H1 (cell line): ENCODE measurements at regions of chr13 and their contacts with region 1.

Region 1: DNA sequence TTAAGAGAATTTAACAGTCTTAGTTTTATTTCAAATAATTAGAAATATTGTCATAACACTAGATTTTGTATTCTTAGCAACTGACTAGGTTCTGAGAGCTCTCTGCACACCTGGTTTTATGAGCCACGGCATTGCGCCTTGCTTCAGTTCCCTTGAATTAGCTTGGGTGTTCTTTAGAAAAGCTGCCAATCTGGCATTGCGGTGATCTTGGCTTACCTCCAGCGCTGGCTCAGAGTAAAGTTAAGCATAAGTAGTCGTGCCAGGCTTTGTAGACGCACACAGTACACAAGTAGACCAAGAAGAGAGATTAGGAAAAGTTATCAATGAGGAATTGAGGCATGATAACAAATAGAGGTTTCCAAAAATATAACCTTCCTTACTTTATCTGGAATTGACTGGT is 45.7 kb downstream of the TPP2 start:
- DNase-seq: no peak
- H3K4me3 ChIP-seq: no peak overlapping the region
- H3K27ac ChIP-seq: no peak overlapping the region
- H3K4me1 ChIP-seq: no peaks in the 10 kb centered on the region
- H3K27me3 ChIP-seq: no peaks in the 10 kb centered on the region
- CTCF ChIP-seq: no peak
- EP300 ChIP-seq: no peak
- POLR2A ChIP-seq: no peak
- RAD21 ChIP-seq: no peak

Region 2: GRCh38 chr13:102609696-102610095 is 32.8 kb before region 1 on chr13:
- CTCF ChIA-PET with region 1: no interaction called
- POLR2A ChIA-PET with region 1: no interaction called
- DNase-seq: no peak
- H3K4me3 ChIP-seq: no peak overlapping the region
- H3K27ac ChIP-seq: no peak overlapping the region
- H3K4me1 ChIP-seq: no peaks in the 10 kb centered on the region
- H3K27me3 ChIP-seq: no peaks in the 10 kb centered on the region
- CTCF ChIP-seq: no peak
- EP300 ChIP-seq: no peak
- POLR2A ChIP-seq: no peak
- RAD21 ChIP-seq: no peak

Region 3: DNA sequence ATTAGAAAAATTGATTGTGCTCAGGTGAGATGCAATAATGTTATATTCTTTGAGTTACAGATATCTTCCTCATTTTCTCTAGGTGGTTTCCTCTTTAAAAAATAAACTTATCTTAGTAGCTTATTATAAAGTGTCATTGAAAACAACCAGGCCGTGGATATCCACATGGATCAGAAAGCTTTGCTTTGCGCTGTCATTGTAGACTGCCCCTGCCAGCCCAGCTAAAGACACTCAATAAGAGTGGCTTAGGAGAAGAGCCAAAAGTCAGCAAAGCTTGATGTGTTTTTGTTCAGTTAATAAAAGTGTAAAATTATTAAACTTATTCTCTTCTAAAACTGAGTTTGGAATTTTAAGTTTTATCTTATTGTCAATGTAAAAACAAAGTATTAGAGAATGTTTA is 11.3 kb before region 1 on chr13:
- CTCF ChIA-PET with region 1: interaction called, 3 read pairs
- POLR2A ChIA-PET with region 1: interaction called, 10 read pairs
- DNase-seq: no peak
- H3K4me3 ChIP-seq: no peak overlapping the region
- H3K27ac ChIP-seq: no peak overlapping the region
- H3K4me1 ChIP-seq: no peaks in the 10 kb centered on the region
- H3K27me3 ChIP-seq: no peaks in the 10 kb centered on the region
- CTCF ChIP-seq: no peak
- EP300 ChIP-seq: no peak
- POLR2A ChIP-seq: no peak
- RAD21 ChIP-seq: no peak

Region 4: DNA sequence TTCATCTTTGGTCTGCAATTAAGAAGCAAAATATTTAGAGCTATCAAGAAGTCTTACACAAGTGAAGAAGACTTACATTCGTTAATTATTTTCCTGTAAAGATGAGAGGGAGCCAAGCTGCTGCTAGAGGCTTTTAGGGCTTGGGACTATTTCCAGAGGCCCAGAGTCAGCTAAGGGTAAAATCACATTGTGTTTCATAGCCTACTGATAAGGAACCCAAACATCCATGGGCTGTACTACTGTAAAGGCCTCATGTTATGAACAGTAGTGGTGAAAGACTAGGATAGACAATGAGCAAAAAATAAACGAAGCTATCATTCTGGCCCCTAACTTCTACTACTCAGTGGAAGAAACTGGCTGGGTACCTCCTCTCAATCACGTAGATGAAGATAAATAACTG is 142.0 kb after region 1 on chr13:
- CTCF ChIA-PET with region 1: no interaction called
- POLR2A ChIA-PET with region 1: no interaction called
- DNase-seq: no peak
- H3K4me3 ChIP-seq: no peak overlapping the region
- H3K27ac ChIP-seq: no peak overlapping the region
- H3K4me1 ChIP-seq: no peaks in the 10 kb centered on the region
- H3K27me3 ChIP-seq: no peaks in the 10 kb centered on the region
- CTCF ChIP-seq: no peak
- EP300 ChIP-seq: no peak
- POLR2A ChIP-seq: no peak
- RAD21 ChIP-seq: no peak

Region 5: DNA sequence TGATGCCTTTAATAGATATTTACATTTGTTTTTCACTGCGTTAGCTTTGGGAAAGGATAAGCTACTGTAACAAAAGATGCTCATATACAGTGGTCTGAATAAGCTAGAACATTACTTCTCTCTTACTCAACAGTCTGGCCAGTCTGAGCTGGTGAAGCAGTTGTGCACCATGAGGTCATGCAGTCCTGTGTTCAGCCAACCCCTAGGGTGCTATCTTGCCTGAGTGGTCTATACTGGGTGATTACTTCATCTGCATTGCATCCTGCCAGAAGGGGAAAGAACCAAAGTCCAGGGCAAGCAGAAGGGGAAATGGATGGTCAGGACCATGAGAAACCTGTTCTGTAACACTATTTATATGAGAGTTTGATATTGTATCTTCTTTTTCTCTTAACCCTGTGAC is 234.8 kb after region 1 on chr13:
- CTCF ChIA-PET with region 1: no interaction called
- POLR2A ChIA-PET with region 1: no interaction called
- DNase-seq: no peak
- H3K4me3 ChIP-seq: no peak overlapping the region
- H3K27ac ChIP-seq: no peak overlapping the region
- H3K4me1 ChIP-seq: peaks cover 0 to 4% (median 3%) of the 10 kb centered on the region in 4 experiments; a peak in 2 of 7 replicates
- H3K27me3 ChIP-seq: no peaks in the 10 kb centered on the region
- CTCF ChIP-seq: no peak
- EP300 ChIP-seq: no peak
- POLR2A ChIP-seq: no peak
- RAD21 ChIP-seq: no peak